Adrenal gland (tissue), 19 donors: ENCODE measurements at regions of chrX and their contacts with region 1.

Region 1: DNA sequence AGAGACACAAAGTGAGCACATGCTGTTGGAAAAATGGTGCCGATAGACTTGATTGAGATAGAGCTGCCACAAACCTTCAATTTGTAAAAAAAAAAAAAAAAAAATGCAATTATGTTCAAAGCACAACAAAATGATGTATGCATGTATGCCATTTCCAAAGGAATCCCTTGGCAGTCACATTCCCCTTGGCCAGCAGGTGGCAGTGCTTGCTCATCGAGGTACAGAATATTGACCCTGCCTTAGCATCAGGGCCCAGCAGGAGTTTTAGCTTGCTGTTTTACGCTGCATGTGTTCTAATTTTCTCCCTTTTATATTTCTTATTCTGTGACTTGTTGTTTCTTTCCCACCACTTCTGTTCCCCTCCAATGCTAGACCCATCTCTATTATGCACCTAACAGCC is 34.5 kb upstream of the CYBB start:
- DNase-seq: peak; percentile 74 to 86 (median 78)
- H3K4me3 ChIP-seq: no peak overlapping the region
- H3K27ac ChIP-seq: no peak overlapping the region
- H3K4me1 ChIP-seq: no peaks in the 10 kb centered on the region
- H3K27me3 ChIP-seq: no peaks in the 10 kb centered on the region
- CTCF ChIP-seq: peak; percentile 82 to 92 (median 84)
- POLR2A ChIP-seq: no peak

Region 2: DNA sequence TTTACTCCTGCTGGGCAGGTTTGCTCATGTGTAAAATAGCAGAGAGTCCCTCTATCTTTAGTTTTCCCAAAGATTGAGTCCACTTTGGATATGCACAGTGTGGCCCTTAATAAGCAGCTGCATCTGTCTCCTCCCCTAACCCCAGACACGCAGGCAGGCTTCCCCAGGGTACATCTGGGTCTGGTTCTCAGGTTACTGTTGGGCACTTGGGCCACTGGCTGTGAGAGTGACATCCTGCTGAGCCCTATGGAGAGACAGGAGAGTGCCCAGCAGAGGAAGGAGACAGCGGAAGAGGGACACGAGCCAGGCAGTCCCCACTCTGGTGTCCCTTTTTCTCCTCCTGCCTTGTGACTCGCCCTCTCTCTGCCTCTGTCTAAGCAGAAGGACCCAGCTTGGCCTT is 43.8 kb before region 1 on chrX:
- intact Hi-C with region 1: no loop called
- DNase-seq: no peak
- H3K4me3 ChIP-seq: no peak overlapping the region
- H3K27ac ChIP-seq: no peak overlapping the region
- H3K4me1 ChIP-seq: no peaks in the 10 kb centered on the region
- H3K27me3 ChIP-seq: no peaks in the 10 kb centered on the region
- CTCF ChIP-seq: no peak
- POLR2A ChIP-seq: no peak

Region 3: GRCh38 chrX:37825209-37825842 is 80.0 kb after region 1 on chrX:
- intact Hi-C with region 1: loop called in 1 of 2 experiments (anchors 10 kb)
- DNase-seq: peak; percentile 29 to 76 (median 54)
- H3K4me3 ChIP-seq: no peak overlapping the region
- H3K27ac ChIP-seq: no peak overlapping the region
- H3K4me1 ChIP-seq: no peaks in the 10 kb centered on the region
- H3K27me3 ChIP-seq: no peaks in the 10 kb centered on the region
- CTCF ChIP-seq: peak; percentile 83 to 92 (median 86)
- POLR2A ChIP-seq: no peak

Region 4: DNA sequence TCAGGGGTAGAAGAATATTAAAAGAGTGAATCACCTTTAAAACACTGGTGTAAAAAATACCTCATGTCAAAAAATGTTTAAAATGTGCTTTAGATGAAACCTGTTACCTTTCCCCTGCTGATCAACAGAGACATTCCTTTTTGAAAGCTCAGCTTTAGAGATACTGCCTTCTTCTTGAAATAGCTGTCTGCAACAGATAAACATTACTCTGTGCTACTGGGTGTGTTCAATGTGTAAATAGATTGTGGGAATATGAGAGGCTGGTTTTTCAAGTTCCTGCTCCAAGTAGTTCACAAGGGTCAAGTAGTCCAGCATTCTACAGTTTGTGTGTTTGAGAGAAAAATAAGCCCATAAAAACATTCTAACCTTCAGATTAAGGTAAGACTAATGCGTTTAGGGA is 260.9 kb after region 1 on chrX and contains the start of gene SYTL5:
- intact Hi-C with region 1: loop called in 1 of 2 experiments (anchors 10 kb)
- DNase-seq: no peak
- H3K4me3 ChIP-seq: no peak within 1 kb of the TSS
- H3K27ac ChIP-seq: no peak within 1 kb of the TSS
- H3K4me1 ChIP-seq: no peaks in the 10 kb centered on the region
- H3K27me3 ChIP-seq: no peaks in the 10 kb centered on the region
- CTCF ChIP-seq: no peak
- POLR2A ChIP-seq: no peak
- total RNA-seq, gene SYTL5: 1.8 to 38.1 (median 16.3) TPM

Region 5: DNA sequence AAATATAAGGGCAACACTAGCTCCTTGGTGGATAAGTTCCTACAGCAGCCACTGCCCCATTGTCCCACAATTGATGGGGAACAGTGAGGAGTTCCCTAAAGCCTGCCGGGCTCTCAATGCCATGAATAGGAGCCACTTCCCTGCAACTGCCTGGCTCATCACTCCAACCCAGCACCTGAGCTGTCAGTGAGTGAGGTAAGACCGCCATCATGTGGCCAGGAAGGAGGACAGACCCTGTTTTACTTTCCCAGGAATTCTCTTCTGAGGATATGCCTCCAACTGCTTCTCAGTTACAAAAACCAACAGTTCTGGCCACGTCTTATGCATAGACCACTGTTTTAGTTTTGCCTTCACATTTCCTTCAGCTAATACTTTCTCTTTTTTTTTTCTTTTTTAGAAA is 429.8 kb after region 1 on chrX:
- intact Hi-C with region 1: loop called in 1 of 2 experiments (anchors 10 kb)
- DNase-seq: peak; percentile 28 to 56 (median 38)
- H3K4me3 ChIP-seq: no peak overlapping the region
- H3K27ac ChIP-seq: no peak overlapping the region
- H3K4me1 ChIP-seq: no peaks in the 10 kb centered on the region
- H3K27me3 ChIP-seq: peaks cover 15% of the 10 kb centered on the region
- CTCF ChIP-seq: peak; percentile 23 to 66 (median 50)
- POLR2A ChIP-seq: no peak